Dorsolateral prefrontal cortex (tissue), 120 donors: ENCODE measurements at regions of chrX and their contacts with region 1.

Region 1: DNA sequence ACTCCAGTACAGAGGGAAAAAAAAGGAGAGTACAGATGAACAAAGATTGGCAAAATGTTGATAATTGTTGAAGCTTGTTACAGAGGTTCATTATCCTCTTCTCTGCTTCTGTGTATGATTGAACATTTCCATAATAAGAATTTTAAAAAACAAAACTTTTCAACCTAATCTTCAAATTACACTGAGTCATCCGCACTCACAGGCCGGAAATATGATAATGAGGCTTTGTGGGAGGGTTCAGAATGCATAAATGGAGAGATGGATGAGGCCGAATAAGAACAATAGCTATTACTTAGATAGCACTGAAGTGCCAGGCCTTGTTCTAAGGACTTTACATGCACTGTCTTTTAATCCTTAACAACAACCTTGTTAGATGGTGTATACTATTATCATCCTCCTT is 4.6 kb upstream of the ERCC6L start:
- DNase-seq: no peak
- H3K4me3 ChIP-seq: no peak overlapping the region
- H3K27ac ChIP-seq: no peak overlapping the region
- H3K27me3 ChIP-seq: peaks cover 0 to 42% (median 0%) of the 10 kb centered on the region in 45 donors
- CTCF ChIP-seq: no peak

Region 2: DNA sequence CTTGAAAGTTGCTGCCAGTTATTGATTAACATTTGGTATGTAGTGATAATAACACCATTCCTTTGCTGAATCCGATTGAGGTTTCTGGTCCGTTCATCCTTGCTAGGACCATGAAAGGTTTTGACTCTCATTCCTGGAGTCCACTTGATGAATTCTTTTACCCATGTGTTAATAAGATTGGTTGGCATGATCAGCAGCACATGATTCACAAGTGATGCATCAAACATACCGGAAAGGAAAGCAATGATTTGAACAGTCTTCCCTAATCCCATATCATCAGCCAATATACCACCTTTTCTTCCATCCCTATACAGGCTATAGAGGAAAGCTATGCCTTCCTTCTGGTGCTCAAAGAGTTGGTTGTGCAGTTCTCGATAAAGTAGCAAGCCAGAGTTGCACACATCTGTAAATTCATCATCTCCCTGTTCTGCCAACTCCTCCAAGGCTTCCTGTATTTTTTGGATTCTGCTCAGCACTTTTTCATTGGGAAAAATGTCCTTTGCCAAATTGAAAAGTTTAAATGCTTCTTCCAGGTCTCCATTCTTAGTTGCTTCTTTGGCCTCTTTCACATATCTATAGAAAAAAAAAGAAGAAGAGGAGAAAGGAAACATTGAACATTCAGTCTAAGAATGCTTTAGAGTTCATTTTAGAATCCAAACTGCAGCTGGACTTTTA is 35.2 kb before region 1 on chrX:
- intact Hi-C with region 1: no loop called
- DNase-seq: no peak
- H3K4me3 ChIP-seq: no peak overlapping the region
- H3K27ac ChIP-seq: no peak overlapping the region
- H3K27me3 ChIP-seq: peaks cover 0 to 46% (median 0%) of the 10 kb centered on the region in 45 donors
- CTCF ChIP-seq: no peak

Region 3: GRCh38 chrX:72276478-72276953 is 33.0 kb after region 1 on chrX:
- intact Hi-C with region 1: loop called in 1 of 2 experiments (anchors 5 kb)
- DNase-seq: no peak
- H3K4me3 ChIP-seq: peak overlapping the region; percentile 34 to 88 (median 72)
- H3K27ac ChIP-seq: peak overlapping the region in 56 of 59 donors; percentile 65 to 94 (median 82)
- H3K27me3 ChIP-seq: peaks cover 0 to 33% (median 0%) of the 10 kb centered on the region in 45 donors
- CTCF ChIP-seq: no peak

Region 4: DNA sequence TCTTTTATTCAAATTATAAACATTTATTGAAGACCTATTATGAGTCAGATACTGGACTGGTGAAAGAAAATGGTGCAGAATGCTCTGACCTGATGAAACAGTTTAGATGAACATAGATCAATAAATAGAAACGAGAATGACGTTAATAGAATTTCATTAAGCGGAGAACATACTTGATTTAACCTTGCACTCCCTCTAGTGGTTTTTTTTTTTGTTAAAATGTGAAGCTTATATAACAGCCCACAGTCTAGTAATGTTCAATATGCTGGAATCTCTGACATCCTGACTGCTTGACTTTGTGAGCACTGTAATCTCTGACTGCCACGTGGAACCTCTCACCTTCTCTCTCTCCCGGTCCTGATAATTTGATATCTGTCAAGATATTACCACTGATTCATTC is 296.8 kb after region 1 on chrX:
- intact Hi-C with region 1: loop called in 1 of 2 experiments (anchors 5 kb)
- DNase-seq: no peak
- H3K4me3 ChIP-seq: no peak overlapping the region
- H3K27ac ChIP-seq: no peak overlapping the region
- H3K27me3 ChIP-seq: peaks cover 0 to 74% (median 9%) of the 10 kb centered on the region in 45 donors
- CTCF ChIP-seq: peak in 54 of 56 donors; percentile 16 to 72 (median 49)

Region 5: GRCh38 chrX:72609313-72609712 is 365.8 kb after region 1 on chrX:
- intact Hi-C with region 1: no loop called
- DNase-seq: no peak
- H3K4me3 ChIP-seq: no peak overlapping the region
- H3K27ac ChIP-seq: no peak overlapping the region
- H3K27me3 ChIP-seq: peaks cover 0 to 61% (median 24%) of the 10 kb centered on the region in 45 donors
- CTCF ChIP-seq: peak in 3 of 56 donors; percentile 11 to 15 (median 11)